GM12878 (cell line): ENCODE measurements at regions of chr16 and their contacts with region 1.

Region 1: GRCh38 chr16:4976079-4976478 is 17.9 kb downstream of the SEC14L5 start:
- DNase-seq: peak; percentile 57
- ATAC-seq: peak; percentile 99
- H3K4me3 ChIP-seq: no peak overlapping the region
- H3K27ac ChIP-seq: no peak overlapping the region
- H3K4me1 ChIP-seq: peaks cover 17% of the 10 kb centered on the region
- H3K27me3 ChIP-seq: no peaks in the 10 kb centered on the region; a peak in 1 of 4 replicates
- CTCF ChIP-seq: no peak
- EP300 ChIP-seq: peak in 1 of 2 experiments; percentile 86; a peak in 1 of 4 replicates
- POLR2A ChIP-seq: no peak
- RAD21 ChIP-seq: no peak

Region 2: GRCh38 chr16:5062790-5063765 is 87.0 kb after region 1 on chr16:
- CTCF ChIA-PET with region 1: no interaction called
- POLR2A ChIA-PET with region 1: no interaction called
- RAD21 ChIA-PET with region 1: no interaction called
- SMC1A ChIA-PET with region 1: interaction called, 3 read pairs
- in situ Hi-C with region 1: no loop called
- intact Hi-C with region 1: loop called (anchors 10 kb)
- DNase-seq: no peak
- ATAC-seq: 0 out of 3 replicates have a peak, but pooled peaks have one; percentile 26
- H3K4me3 ChIP-seq: no peak overlapping the region
- H3K27ac ChIP-seq: no peak overlapping the region
- H3K4me1 ChIP-seq: peaks cover 16% of the 10 kb centered on the region
- H3K27me3 ChIP-seq: no peaks in the 10 kb centered on the region; a peak in 1 of 4 replicates
- CTCF ChIP-seq: peak; percentile 6 to 21 (median 21); a peak in 3 of 6 replicates
- EP300 ChIP-seq: no peak
- POLR2A ChIP-seq: no peak
- RAD21 ChIP-seq: 0 out of 2 replicates have a peak, but pooled peaks have one; percentile 14